ENCODE measurements at regions of chr12 and their contacts with region 1.

Region 1: DNA sequence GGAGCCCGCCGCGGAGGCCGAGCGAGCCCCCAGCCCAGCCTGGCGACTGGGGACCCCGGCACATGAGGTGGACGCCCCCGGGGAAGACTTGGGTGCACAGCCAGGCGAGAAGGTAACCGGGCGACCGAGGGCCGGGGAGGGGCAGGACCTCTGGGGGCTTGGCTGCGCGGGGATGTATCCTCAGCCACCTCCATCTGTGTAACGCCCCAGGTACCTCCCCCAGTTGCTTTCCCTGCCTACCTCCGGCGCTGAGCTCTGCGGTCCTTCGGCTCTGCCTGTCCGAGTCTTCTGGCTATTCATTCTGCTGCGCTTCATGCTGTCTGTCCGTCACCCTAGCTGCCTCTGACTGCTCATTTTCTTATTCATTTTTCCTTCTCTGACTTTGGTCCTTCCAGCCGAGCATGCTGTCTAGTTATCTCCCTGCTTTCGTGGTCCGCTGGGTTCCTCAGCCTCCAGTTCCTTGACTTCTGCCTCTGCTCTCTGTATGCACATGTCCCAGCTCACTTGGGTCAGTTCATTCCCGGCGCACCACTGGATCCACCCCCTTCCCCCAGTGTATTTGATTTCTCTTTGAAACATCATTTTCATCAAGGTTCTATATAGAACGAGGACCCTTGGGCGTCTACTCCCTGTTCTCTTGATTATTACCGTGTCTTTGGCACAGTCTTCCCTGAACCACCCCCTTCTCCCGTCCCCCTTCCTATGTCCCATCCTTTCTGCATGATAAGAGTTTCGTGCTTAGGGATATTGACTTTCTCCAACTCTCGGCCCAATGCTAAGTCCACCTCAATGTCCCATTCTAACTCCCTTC is 612 bp downstream of the PHC1 start:
- DNase-seq: peak; percentile 32 to 83 (median 50)
- ATAC-seq: peak; percentile 81
- H3K4me3 ChIP-seq: peak overlapping the region; percentile 85
- H3K4me3 Mint-ChIP-seq: no peak overlapping the region
- H3K27ac ChIP-seq: no peak overlapping the region
- H3K27ac Mint-ChIP-seq: no peak overlapping the region
- H3K4me1 ChIP-seq: peaks cover 16% of the 10 kb centered on the region
- H3K4me1 Mint-ChIP-seq: peaks cover 18% of the 10 kb centered on the region
- H3K27me3 ChIP-seq: no peaks in the 10 kb centered on the region
- H3K27me3 Mint-ChIP-seq: no peaks in the 10 kb centered on the region
- CTCF ChIP-seq: no peak

Region 2: DNA sequence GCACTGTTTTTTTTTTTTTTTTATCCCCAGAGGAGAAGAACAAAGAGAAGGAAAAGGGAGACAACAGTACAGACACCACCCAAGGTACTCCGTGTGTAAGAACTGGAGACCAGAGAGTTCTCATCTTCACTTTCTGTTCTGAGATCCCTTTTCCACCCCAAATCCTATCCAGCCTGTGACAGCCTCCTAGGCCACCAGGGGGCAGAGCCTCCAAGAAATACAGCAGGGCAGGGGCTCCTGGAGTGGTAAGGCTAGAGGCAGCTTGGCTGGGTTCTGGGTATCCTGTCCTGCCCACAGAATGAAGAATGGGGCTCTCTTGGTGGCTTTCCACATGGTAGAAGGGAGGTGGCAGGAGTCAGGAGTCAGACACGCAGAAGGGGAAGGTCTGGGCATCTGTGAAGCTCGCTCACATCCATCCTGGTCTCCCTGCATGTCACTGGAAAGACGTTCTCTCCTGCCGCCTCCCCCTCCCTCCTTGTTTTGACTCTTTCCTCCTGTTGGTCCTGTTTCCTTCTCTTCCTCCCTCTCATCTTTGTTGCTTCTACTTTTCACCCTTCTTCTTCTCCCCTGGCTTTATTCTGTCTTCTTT is 1772.8 kb before region 1 on chr12:
- CTCF ChIA-PET with region 1: no interaction called
- POLR2A ChIA-PET with region 1: no interaction called
- intact Hi-C with region 1: no loop called
- DNase-seq: peak; percentile 20 to 70 (median 48)
- ATAC-seq: peak; percentile 90
- H3K4me3 ChIP-seq: no peak overlapping the region
- H3K4me3 Mint-ChIP-seq: no peak overlapping the region
- H3K27ac ChIP-seq: no peak overlapping the region
- H3K27ac Mint-ChIP-seq: no peak overlapping the region
- H3K4me1 ChIP-seq: no peaks in the 10 kb centered on the region
- H3K4me1 Mint-ChIP-seq: no peaks in the 10 kb centered on the region
- H3K27me3 ChIP-seq: no peaks in the 10 kb centered on the region
- H3K27me3 Mint-ChIP-seq: no peaks in the 10 kb centered on the region
- CTCF ChIP-seq: peak; percentile 48

Region 3: GRCh38 chr12:8697476-8698131 is 217.3 kb before region 1 on chr12 and contains the start of gene RIMKLB:
- CTCF ChIA-PET with region 1: no interaction called
- POLR2A ChIA-PET with region 1: no interaction called
- intact Hi-C with region 1: loop called in 1 of 2 experiments (anchors 2 kb)
- DNase-seq: peak; percentile 50 to 92 (median 76)
- ATAC-seq: peak; percentile 79
- H3K4me3 ChIP-seq: peak within 1 kb of the TSS; percentile 72
- H3K4me3 Mint-ChIP-seq: peak within 1 kb of the TSS; percentile 99
- H3K27ac ChIP-seq: peak within 1 kb of the TSS; percentile 32 to 62
- H3K27ac Mint-ChIP-seq: peak within 1 kb of the TSS; percentile 83
- H3K4me1 ChIP-seq: peaks cover 12% of the 10 kb centered on the region
- H3K4me1 Mint-ChIP-seq: peaks cover 46% of the 10 kb centered on the region
- H3K27me3 ChIP-seq: no peaks in the 10 kb centered on the region
- H3K27me3 Mint-ChIP-seq: no peaks in the 10 kb centered on the region
- CTCF ChIP-seq: no peak
- total RNA-seq, gene RIMKLB: 14.8 to 15.2 TPM

Region 4: DNA sequence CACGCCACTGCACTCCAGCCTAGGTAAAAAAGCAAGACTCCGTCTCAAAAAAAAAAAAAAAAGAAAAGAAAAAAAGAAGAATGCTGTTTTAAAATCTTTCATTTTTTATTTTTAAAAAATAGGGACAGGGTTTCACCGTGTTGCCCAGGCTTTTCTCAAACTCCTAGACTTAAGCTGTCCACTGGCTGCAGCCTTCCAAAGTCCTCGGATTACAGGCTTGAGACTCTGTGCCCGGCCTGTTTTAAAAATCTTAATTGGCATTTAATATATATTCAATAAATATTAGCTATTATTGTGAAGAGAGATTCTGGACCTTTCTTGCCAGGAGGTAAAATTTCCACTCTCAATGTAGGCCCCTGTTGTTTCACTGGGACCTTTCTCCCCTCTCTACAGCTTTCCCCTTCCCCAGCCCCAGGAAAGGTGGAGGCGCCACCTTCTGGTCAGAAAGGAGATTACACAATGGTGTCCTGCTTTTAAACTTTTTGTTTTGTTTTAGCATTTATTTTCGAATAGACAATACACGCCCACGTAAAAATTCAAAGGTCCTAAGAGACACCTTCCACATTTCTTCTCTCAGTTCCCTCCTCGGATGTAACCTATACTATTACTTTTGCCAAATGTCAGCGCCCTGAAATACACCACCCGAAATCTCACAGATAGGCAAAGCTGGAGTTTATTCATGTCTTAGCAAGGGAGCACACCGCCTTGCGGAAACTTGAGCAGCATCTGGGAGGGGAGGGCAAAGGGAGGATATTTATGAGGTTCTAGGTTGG is 24.4 kb before region 1 on chr12:
- CTCF ChIA-PET with region 1: interaction called, 10 read pairs
- POLR2A ChIA-PET with region 1: interaction called, 3 read pairs
- intact Hi-C with region 1: no loop called
- DNase-seq: peak; percentile 38 to 81 (median 52)
- ATAC-seq: peak; percentile 88
- H3K4me3 ChIP-seq: peak overlapping the region; percentile 57
- H3K4me3 Mint-ChIP-seq: peak overlapping the region; percentile 92
- H3K27ac ChIP-seq: no peak overlapping the region
- H3K27ac Mint-ChIP-seq: peak overlapping the region; percentile 29
- H3K4me1 ChIP-seq: peaks cover 3% of the 10 kb centered on the region
- H3K4me1 Mint-ChIP-seq: peaks cover 5% of the 10 kb centered on the region
- H3K27me3 ChIP-seq: no peaks in the 10 kb centered on the region
- H3K27me3 Mint-ChIP-seq: no peaks in the 10 kb centered on the region
- CTCF ChIP-seq: peak; percentile 93